Activated CD4-positive, alpha-beta memory T cell treated with anti-CD3 and anti-CD28 coated beads, Interleukin-2, amount 10 ng/mL, durations not matched to agents 7 days and 5 days (primary cell): ENCODE measurements at regions of chr5 and their contacts with region 1.

Region 1: DNA sequence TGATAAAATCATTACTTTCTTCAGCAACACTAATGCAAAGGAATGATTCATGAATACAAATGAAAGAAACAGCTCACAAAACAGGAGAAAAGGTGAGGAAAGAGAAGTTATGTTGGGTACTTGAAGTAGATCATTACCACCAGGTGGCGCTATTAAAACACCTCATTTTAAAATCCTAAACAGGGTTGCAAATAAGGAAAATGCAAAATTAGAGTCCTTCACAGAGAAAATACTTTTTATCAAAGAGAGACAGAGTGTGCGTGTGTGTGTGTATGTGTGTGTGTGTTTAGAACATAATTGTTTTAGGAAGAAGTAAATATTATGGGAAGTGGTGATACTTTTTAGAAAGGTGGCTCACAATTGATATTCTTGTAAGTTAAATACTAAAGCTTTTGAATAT is 49.5 kb upstream of the CD180 start:
- DNase-seq: no peak
- H3K4me3 Mint-ChIP-seq: no peak overlapping the region
- H3K27ac Mint-ChIP-seq: no peak overlapping the region
- H3K4me1 Mint-ChIP-seq: peaks cover 17% of the 10 kb centered on the region
- H3K27me3 Mint-ChIP-seq: no peaks in the 10 kb centered on the region

Region 2: GRCh38 chr5:67115246-67115645 is 130.9 kb before region 1 on chr5:
- CTCF ChIA-PET with region 1: no interaction called
- POLR2A ChIA-PET with region 1: no interaction called
- DNase-seq: no peak
- H3K4me3 Mint-ChIP-seq: no peak overlapping the region
- H3K27ac Mint-ChIP-seq: no peak overlapping the region
- H3K4me1 Mint-ChIP-seq: no peaks in the 10 kb centered on the region
- H3K27me3 Mint-ChIP-seq: no peaks in the 10 kb centered on the region

Region 3: DNA sequence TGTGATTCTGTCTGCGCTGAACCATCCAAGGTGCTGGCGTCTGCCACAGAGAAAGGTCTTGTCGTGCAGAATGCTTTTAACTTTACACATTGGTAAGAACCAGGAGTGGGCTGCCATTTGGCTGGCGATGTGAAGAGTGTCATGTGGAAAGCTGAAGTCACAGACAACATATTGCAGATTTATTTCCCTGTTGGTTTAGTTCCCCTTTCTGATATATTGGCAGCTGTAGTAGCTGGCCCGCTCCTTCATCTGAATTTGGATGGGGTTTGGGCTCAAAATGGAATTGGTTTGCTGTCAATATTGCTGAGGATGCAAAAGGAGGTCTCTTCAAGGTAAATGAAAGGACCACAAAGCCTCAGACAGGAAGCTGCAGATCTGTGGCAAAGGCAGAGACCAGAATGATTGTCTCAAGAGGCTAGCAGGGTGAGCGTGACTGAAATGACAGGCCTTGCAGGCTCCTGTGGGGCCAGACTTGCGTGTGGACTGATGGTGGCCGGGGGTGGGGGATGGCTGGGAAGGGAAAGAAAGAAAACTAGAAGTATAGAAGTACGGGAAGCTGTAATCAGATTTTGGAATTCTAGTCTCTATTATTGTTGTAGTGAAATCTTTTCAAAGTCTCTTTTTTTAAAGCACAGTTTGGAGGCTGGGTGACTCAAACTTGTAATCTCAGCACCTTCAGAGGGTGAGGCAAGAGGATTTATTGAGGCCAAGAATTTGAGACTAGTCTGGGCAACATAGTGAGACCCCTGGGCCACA is 24.4 kb before region 1 on chr5:
- CTCF ChIA-PET with region 1: interaction called, 13 read pairs
- POLR2A ChIA-PET with region 1: interaction called, 6 read pairs
- DNase-seq: peak; percentile 82
- H3K4me3 Mint-ChIP-seq: peak overlapping the region; percentile 46
- H3K27ac Mint-ChIP-seq: peak overlapping the region; percentile 95
- H3K4me1 Mint-ChIP-seq: peaks cover 65% of the 10 kb centered on the region
- H3K27me3 Mint-ChIP-seq: no peaks in the 10 kb centered on the region